ENCODE measurements at regions of chr15 and their contacts with region 1.

Region 1: DNA sequence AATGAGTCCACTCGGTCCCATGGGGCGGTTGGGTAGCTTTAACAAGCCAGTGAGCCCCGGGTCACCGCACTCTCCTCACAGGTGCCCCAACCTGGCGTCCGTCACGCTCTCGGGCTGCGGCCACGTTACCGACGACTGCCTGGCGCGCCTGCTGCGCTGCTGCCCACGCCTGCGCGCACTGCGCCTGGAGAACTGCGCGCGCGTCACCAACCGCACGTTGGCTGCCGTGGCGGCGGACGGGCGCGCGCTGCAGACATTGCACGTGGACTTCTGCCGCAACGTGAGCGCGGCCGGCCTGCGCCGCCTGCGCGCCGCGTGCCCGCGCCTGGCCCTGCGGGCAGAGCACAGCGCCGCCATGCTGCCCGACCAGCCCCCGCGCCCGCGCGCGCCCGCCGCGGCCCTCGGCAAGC is 3.4 kb downstream of the FBXL22 start:
- DNase-seq: peak; percentile 88 to 92 (median 89)
- H3K4me3 ChIP-seq: peak overlapping the region; percentile 68 to 91 (median 91)
- H3K4me3 Mint-ChIP-seq: peak overlapping the region; percentile 91 to 94
- H3K27ac ChIP-seq: peak overlapping the region in 1 of 2 donors; percentile 50
- H3K27ac Mint-ChIP-seq: peak overlapping the region in 3 of 7 donors; percentile 42 to 71 (median 58)
- H3K4me1 ChIP-seq: peaks cover 29 to 44% of the 10 kb centered on the region in 2 donors
- H3K4me1 Mint-ChIP-seq: peaks cover 44% of the 10 kb centered on the region
- H3K27me3 ChIP-seq: no peaks in the 10 kb centered on the region
- H3K27me3 Mint-ChIP-seq: peaks cover 2 to 11% (median 8%) of the 10 kb centered on the region in 3 donors
- CTCF ChIP-seq: no peak

Region 2: DNA sequence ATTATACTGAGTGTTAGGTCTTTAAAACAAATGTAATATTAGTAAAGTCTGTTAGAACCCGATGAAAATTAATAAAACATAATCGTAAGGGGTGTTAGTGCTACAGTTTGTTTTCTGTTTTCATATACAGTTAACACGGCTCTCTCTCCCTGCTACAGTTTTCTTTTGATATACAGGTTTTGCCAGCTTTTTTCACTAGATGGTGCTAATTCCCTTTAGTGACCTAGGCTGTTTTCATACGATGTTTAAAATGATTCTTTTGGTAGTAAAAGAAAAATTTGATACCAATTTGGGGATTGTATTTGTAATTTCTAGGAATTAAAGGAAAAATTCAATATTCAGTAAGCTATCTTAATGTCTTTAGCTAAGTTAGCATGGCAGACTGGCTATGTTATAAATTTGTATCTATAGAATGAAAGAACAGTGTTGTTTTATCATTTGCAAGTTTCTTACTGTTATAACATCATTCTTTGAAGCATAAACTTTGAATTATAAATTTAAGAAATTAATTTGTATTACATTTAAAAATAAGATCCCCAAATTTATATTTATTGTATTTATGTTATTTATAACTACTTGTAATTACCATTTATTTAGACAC is 311.7 kb before region 1 on chr15:
- intact Hi-C with region 1: loop called (anchors 10 kb)
- DNase-seq: peak; percentile 13 to 47 (median 23)
- H3K4me3 ChIP-seq: no peak overlapping the region
- H3K4me3 Mint-ChIP-seq: no peak overlapping the region
- H3K27ac ChIP-seq: no peak overlapping the region
- H3K27ac Mint-ChIP-seq: no peak overlapping the region
- H3K4me1 ChIP-seq: peaks cover 0 to 4% of the 10 kb centered on the region in 2 donors
- H3K4me1 Mint-ChIP-seq: peaks cover 20% of the 10 kb centered on the region
- H3K27me3 ChIP-seq: no peaks in the 10 kb centered on the region
- H3K27me3 Mint-ChIP-seq: peaks cover 0 to 3% (median 2%) of the 10 kb centered on the region in 3 donors
- CTCF ChIP-seq: peak; percentile 79

Region 3: DNA sequence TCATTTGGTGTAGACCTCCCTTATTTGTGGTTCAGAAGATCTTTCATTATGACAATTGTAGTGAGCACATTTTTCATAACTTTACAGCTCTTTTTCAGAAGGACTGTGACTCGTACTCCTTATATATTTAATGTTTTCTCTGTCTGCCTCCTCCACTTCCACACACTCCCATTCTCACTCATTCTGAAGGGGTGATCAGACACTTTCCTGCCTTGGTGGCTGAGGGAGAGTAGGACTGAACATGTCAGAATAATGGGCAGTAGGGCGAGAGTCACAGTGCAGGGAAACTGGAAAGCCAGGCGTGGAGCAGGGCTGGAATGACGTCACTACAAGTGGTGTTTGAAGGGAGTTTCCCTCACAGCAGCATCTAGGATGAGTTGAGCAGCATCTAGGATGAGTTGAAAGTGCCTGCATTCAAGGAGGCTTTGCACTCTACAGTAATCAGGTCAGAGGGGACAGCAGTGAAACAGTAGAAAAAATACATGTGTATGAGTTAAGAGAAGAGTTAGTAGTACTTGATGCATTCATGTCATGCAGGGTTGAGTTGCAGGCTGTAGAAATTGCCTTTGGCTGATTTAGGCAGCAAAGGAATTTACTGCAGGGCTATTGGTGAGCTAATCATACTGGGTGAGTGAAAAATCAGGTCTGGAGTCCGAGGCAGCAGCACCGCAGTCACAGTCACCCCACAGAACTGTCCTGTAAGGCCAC is 39.7 kb before region 1 on chr15:
- intact Hi-C with region 1: no loop called
- DNase-seq: no peak
- H3K4me3 ChIP-seq: no peak overlapping the region
- H3K4me3 Mint-ChIP-seq: no peak overlapping the region
- H3K27ac ChIP-seq: peak overlapping the region in 1 of 2 donors; percentile 38
- H3K27ac Mint-ChIP-seq: peak overlapping the region in 3 of 7 donors; percentile 15 to 37 (median 30)
- H3K4me1 ChIP-seq: no peaks in the 10 kb centered on the region
- H3K4me1 Mint-ChIP-seq: no peaks in the 10 kb centered on the region
- H3K27me3 ChIP-seq: no peaks in the 10 kb centered on the region
- H3K27me3 Mint-ChIP-seq: no peaks in the 10 kb centered on the region
- CTCF ChIP-seq: no peak

Region 4: DNA sequence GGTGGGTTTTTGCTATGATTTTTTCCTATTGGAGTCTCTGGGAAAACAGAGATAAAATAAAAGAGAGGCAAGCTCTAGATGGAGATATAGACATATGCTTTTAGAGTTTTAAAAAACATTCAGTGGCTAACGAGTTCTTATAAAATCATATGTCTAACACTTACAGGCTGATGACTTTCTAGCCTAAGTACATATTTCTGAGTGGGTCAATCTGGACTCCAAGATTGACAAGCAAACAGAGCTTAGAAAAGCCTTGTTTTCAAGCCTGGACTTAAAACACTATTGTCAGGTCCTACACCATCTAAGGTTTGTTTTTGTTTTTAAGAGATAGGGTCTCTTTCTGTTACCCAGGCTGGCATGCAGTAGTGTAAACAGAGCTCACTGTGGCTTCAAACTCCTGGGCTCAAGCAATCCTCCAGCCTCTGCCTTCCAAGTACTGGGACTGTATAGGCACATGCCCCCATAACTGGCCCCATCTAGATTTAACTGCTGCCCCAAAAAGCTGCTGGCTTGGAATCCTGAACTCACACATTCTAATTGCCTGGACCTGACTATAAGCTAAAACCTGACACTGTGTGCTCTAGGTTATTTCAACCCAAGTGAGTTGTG is 82.8 kb after region 1 on chr15:
- intact Hi-C with region 1: no loop called
- DNase-seq: no peak
- H3K4me3 ChIP-seq: no peak overlapping the region
- H3K4me3 Mint-ChIP-seq: no peak overlapping the region
- H3K27ac ChIP-seq: no peak overlapping the region
- H3K27ac Mint-ChIP-seq: peak overlapping the region in 1 of 7 donors; percentile 13
- H3K4me1 ChIP-seq: no peaks in the 10 kb centered on the region
- H3K4me1 Mint-ChIP-seq: no peaks in the 10 kb centered on the region
- H3K27me3 ChIP-seq: no peaks in the 10 kb centered on the region
- H3K27me3 Mint-ChIP-seq: no peaks in the 10 kb centered on the region
- CTCF ChIP-seq: no peak

Region 5: GRCh38 chr15:64381000-64381752 is 780.6 kb after region 1 on chr15 and contains the start of gene PCLAF:
- intact Hi-C with region 1: loop called in 1 of 2 experiments (anchors 5 kb)
- DNase-seq: peak; percentile 82 to 89 (median 84)
- H3K4me3 ChIP-seq: peak within 1 kb of the TSS; percentile 65 to 84 (median 84)
- H3K4me3 Mint-ChIP-seq: peak within 1 kb of the TSS; percentile 89 to 93
- H3K27ac ChIP-seq: peak within 1 kb of the TSS in 1 of 2 donors; percentile 23
- H3K27ac Mint-ChIP-seq: peak within 1 kb of the TSS; percentile 50 to 85 (median 78)
- H3K4me1 ChIP-seq: peaks cover 7 to 20% of the 10 kb centered on the region in 2 donors
- H3K4me1 Mint-ChIP-seq: peaks cover 21% of the 10 kb centered on the region
- H3K27me3 ChIP-seq: no peaks in the 10 kb centered on the region
- H3K27me3 Mint-ChIP-seq: no peaks in the 10 kb centered on the region
- CTCF ChIP-seq: no peak
- polyA plus RNA-seq, gene PCLAF: not detected